Right ventricle myocardium superior (tissue), 1 donor: ENCODE measurements at regions of chr5 and their contacts with region 1.

Region 1: GRCh38 chr5:90434116-90434714 is 24.7 kb upstream of the CETN3 start:
- DNase-seq: no peak
- ATAC-seq: no peak

Region 2: DNA sequence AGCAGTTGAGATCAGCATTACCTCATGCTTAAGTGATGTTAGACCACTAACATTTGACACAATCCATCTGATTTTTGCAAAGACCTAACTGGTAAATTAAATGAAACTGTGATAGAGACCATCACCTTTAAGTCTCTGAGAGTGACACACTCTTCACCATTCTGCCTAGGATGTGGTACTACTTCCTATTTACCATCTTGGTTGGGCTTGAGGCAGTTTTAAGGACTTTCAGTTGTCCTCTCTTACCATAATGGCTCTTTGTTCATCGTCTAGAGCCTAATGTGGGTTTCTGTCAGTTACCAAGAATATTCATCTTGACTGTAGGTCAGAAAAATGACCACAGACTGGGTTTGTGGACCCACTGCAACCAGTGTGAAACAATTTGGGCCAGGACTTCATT is 182.8 kb before region 1 on chr5:
- intact Hi-C with region 1: no loop called
- DNase-seq: no peak
- ATAC-seq: no peak

Region 3: DNA sequence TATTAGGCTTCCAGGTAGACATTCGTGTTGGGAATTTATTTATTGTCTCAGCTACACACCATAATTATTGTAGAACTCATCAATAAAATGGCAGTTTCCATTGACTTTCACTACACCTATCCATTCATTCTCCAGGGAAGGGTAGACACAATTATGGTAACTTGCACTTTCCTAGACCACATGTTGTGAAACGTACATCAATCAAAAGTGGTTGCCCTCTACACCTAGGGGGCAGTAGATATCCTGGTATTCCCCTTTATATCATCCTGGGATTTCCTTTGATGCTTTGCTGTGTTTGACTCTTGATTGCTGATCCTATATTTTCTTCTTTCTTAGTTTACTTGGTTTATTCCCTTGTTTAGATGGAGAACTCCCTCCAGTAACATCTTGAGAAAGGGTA is 172.3 kb after region 1 on chr5:
- intact Hi-C with region 1: loop called (anchors 10 kb)
- DNase-seq: no peak
- ATAC-seq: no peak

Region 4: GRCh38 chr5:90783460-90784333 is 349.5 kb after region 1 on chr5:
- intact Hi-C with region 1: loop called (anchors 10 kb)
- DNase-seq: peak; percentile 54
- ATAC-seq: peak; percentile 64